HepG2 (cell line): ENCODE measurements at regions of chr17 and their contacts with region 1.

Region 1: GRCh38 chr17:44344939-44345453 is at the start of gene GRN:
- DNase-seq: peak; percentile 100
- ATAC-seq: peak; percentile 98
- H3K4me3 ChIP-seq: peak within 1 kb of the TSS; percentile 86 to 99 (median 95)
- H3K27ac ChIP-seq: peak within 1 kb of the TSS; percentile 68
- H3K4me1 ChIP-seq: peaks cover 25% of the 10 kb centered on the region
- H3K27me3 ChIP-seq: peaks cover 0 to 10% of the 10 kb centered on the region in 2 experiments; a peak in 1 of 5 replicates
- CTCF ChIP-seq: no peak
- EP300 ChIP-seq: peak in 1 of 2 experiments; percentile 63; a peak in 2 of 4 replicates
- POLR2A ChIP-seq: peak; percentile 92 to 97
- RAD21 ChIP-seq: no peak; the same call in 1 of the 2 replicates
- total RNA-seq, gene GRN: 41.2 and 86.6 TPM in 2 replicates

Region 2: DNA sequence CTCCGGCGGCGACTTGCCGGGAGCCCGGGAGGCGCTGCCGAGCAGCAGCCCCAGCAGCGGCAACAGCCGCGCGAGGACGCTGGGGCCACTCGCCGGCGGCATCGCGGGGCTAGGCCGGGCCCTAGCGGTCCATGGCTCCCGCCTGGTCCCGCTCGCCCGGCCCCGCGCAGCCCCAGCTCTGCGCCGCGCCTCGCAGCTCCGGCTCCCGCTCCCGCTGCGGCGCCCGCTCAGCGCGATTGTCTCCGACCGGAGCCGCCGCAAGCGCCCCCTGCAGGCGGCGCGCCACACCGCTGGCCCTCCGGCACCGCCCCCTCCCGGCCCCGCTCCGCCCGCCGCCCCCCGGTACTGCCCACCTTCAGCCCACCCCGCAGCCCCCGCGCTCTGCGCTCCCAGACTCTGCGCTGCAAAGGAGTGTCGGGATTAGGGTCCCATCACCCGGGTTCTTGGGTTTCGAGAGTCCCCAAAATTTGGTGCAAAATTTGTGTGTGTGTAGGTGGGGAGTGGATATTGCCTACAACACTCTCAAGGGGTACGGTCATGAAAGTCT is 18.7 kb after region 1 on chr17 and contains the start of gene FAM171A2:
- CTCF ChIA-PET with region 1: no interaction called
- POLR2A ChIA-PET with region 1: interaction called, 24 read pairs
- in situ Hi-C with region 1: no loop called
- intact Hi-C with region 1: no loop called
- DNase-seq: no peak
- ATAC-seq: peak; percentile 82
- H3K4me3 ChIP-seq: peak within 1 kb of the TSS; percentile 75 to 82 (median 76)
- H3K27ac ChIP-seq: no peak within 1 kb of the TSS
- H3K4me1 ChIP-seq: peaks cover 55% of the 10 kb centered on the region
- H3K27me3 ChIP-seq: peaks cover 1 to 14% of the 10 kb centered on the region in 2 experiments; a peak in 3 of 5 replicates
- CTCF ChIP-seq: peak; percentile 68
- EP300 ChIP-seq: no peak
- POLR2A ChIP-seq: no peak; a peak in 1 of 4 replicates
- RAD21 ChIP-seq: peak; percentile 77
- total RNA-seq, gene FAM171A2: 1.0 and 1.8 TPM in 2 replicates